Activated CD8-positive, alpha-beta T cell treated with anti-CD3 and anti-CD28 coated beads for 36 hours (primary cell): ENCODE measurements at regions of chr9 and their contacts with region 1.

Region 1: DNA sequence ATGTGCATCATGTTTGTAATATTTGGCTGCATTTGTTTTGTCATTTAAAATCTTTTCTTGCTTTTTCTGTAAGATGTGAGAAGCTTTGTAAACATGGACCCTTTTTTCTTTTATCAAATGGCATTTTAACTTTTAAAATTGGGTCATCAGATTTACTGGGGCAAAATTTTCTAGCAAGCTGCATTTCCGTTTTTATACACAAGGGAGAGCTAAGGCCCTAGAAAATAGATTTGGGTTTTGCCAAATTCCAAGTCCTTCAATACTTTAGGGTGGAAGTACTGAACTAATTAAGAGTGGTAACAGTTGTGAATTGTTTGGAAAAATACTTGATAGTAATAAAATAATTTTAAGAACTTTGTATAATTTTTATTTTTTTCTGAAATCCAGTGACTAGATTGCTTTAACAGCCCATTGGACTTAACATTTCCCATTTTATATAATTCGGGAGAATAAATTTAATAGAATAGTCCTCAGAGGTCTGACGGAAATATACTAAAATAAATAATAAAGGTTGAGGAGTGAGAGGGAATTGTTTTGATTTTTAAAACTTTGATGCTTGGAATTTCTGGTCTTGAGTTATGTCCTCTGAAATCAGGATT is 117.4 kb downstream of the SMARCA2 start:
- DNase-seq: no peak
- ATAC-seq: no peak
- H3K4me3 Mint-ChIP-seq: no peak overlapping the region
- H3K27ac Mint-ChIP-seq: no peak overlapping the region
- H3K4me1 Mint-ChIP-seq: peaks cover 12% of the 10 kb centered on the region
- H3K27me3 Mint-ChIP-seq: no peaks in the 10 kb centered on the region
- CTCF ChIP-seq: peak; percentile 75

Region 2: DNA sequence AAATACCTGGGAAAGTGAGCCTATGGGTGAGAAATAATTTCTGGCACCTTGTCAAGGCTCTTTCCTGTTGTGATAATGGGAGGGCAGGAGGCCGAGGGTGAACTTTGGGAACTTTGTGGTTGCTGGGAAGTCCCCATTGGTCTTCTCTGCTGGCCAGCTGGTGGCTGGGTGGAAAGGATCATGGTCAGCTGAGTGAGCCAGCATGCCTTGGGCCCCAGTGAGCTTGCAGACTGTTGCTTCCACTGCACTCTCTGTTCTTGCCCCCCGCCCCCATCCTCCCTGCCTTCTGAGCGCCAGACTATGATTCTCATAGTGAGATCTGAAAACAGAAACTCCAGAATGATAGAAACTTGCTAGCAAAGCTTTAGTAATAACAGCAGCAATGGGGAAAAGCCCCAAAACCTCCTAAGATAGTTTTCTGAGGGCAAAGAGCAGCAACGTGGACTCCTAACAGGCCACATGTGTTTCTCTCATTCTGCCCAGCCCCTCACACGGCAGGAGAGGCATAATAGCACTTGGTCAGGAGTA is 256.6 kb before region 1 on chr9:
- CTCF ChIA-PET with region 1: no interaction called
- POLR2A ChIA-PET with region 1: no interaction called
- intact Hi-C with region 1: no loop called
- DNase-seq: peak; percentile 91
- ATAC-seq: peak; percentile 74
- H3K4me3 Mint-ChIP-seq: no peak overlapping the region
- H3K27ac Mint-ChIP-seq: peak overlapping the region; percentile 86
- H3K4me1 Mint-ChIP-seq: peaks cover 28% of the 10 kb centered on the region
- H3K27me3 Mint-ChIP-seq: peaks cover 15% of the 10 kb centered on the region
- CTCF ChIP-seq: no peak

Region 3: GRCh38 chr9:2120926-2121689 is 11.5 kb before region 1 on chr9:
- CTCF ChIA-PET with region 1: interaction called, 32 read pairs
- POLR2A ChIA-PET with region 1: interaction called, 3 read pairs
- intact Hi-C with region 1: no loop called
- DNase-seq: no peak
- ATAC-seq: no peak
- H3K4me3 Mint-ChIP-seq: no peak overlapping the region
- H3K27ac Mint-ChIP-seq: no peak overlapping the region
- H3K4me1 Mint-ChIP-seq: peaks cover 19% of the 10 kb centered on the region
- H3K27me3 Mint-ChIP-seq: no peaks in the 10 kb centered on the region
- CTCF ChIP-seq: no peak

Region 4: DNA sequence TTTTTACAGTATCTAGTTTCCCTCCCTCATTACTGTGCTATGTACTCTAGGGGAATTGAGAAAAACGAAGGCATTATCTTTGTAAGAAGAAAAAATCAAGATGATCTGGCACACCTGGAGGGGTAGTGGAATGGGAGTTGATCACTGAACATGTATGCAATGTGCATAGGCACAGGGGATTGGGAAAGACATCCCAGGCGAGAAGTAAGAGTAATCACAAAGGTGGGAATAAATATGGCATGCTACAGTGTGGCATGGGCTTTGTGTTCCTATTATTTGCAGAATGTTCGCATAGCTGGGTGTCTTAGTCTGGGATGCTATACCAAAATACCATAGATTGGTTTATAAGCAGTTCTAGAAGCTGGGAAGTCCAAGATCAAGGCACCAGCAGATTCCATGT is 13.2 kb after region 1 on chr9:
- CTCF ChIA-PET with region 1: interaction called, 10 read pairs
- POLR2A ChIA-PET with region 1: no interaction called
- intact Hi-C with region 1: no loop called
- DNase-seq: no peak
- ATAC-seq: no peak
- H3K4me3 Mint-ChIP-seq: no peak overlapping the region
- H3K27ac Mint-ChIP-seq: no peak overlapping the region
- H3K4me1 Mint-ChIP-seq: peaks cover 46% of the 10 kb centered on the region
- H3K27me3 Mint-ChIP-seq: no peaks in the 10 kb centered on the region
- CTCF ChIP-seq: no peak

Region 5: GRCh38 chr9:2159521-2160454 is 27.2 kb after region 1 on chr9:
- CTCF ChIA-PET with region 1: interaction called, 13 read pairs
- POLR2A ChIA-PET with region 1: interaction called, 3 read pairs
- intact Hi-C with region 1: no loop called
- DNase-seq: no peak
- ATAC-seq: no peak
- H3K4me3 Mint-ChIP-seq: peak overlapping the region; percentile 81
- H3K27ac Mint-ChIP-seq: peak overlapping the region; percentile 67
- H3K4me1 Mint-ChIP-seq: peaks cover 49% of the 10 kb centered on the region
- H3K27me3 Mint-ChIP-seq: no peaks in the 10 kb centered on the region
- CTCF ChIP-seq: no peak

Region 6: DNA sequence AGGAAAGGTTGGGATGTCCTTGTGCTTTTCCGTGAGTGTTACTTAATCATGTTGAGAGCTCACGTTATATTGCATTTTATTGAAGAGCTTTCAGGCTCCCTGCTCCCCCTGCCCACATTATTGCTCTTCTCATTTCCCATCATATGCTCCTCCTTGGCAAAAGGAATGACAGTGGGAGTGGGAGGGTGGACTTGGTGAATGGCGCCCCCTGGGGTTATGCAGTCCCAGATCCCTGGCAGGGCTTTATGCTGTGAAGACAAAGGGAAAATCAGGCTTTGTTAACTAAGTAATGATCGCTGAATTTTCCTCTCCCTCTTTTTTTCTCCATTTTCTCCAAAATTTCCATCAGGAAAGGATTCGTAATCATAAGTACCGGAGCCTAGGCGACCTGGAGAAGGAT is 49.2 kb after region 1 on chr9:
- CTCF ChIA-PET with region 1: interaction called, 33 read pairs
- POLR2A ChIA-PET with region 1: no interaction called
- intact Hi-C with region 1: no loop called
- DNase-seq: peak; percentile 30
- ATAC-seq: no peak
- H3K4me3 Mint-ChIP-seq: no peak overlapping the region
- H3K27ac Mint-ChIP-seq: no peak overlapping the region
- H3K4me1 Mint-ChIP-seq: peaks cover 9% of the 10 kb centered on the region
- H3K27me3 Mint-ChIP-seq: no peaks in the 10 kb centered on the region
- CTCF ChIP-seq: peak; percentile 43

Region 7: DNA sequence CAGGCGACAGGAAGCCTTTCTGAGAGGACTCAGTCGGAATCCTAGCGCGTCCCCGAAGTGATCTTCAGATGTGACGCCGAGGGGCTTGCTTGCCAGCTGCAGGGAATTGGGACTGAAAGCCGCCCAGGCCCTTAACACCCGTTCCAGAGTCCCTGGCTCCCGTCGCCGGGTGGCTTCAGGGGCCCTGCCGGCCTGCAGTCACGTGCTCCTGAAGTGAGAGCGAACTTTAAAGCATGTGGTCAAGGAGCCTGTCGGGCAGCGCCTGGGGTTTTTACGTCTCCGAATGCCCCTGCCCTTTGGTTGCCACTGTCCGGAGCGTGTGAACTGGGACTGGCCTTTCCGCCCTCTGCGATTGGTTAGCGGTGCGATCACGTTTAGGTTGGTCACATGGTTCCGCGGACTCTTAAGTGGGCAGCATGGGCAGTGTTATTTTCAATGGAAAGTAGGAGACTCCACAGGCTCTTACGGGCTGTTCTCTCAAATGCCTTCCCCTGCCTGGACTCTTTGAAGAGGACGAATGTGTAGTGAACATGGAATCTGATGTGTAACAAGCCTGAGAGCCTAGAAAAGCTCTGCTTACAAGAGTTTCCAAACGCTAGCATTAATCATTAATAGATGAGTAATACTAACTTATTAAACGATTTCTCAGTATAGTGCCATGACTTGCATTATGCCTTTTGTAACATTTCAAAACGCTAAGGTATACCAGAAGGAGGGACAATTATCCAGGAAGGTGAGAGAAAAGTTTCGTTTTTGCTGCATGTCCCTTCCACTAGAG is 490.9 kb after region 1 on chr9:
- CTCF ChIA-PET with region 1: no interaction called
- POLR2A ChIA-PET with region 1: no interaction called
- intact Hi-C with region 1: no loop called
- DNase-seq: peak; percentile 7
- ATAC-seq: no peak
- H3K4me3 Mint-ChIP-seq: peak overlapping the region; percentile 88
- H3K27ac Mint-ChIP-seq: no peak overlapping the region
- H3K4me1 Mint-ChIP-seq: peaks cover 8% of the 10 kb centered on the region
- H3K27me3 Mint-ChIP-seq: peaks cover 67% of the 10 kb centered on the region
- CTCF ChIP-seq: no peak